ENCODE measurements at regions of chr1 and their contacts with region 1.

Region 1: DNA sequence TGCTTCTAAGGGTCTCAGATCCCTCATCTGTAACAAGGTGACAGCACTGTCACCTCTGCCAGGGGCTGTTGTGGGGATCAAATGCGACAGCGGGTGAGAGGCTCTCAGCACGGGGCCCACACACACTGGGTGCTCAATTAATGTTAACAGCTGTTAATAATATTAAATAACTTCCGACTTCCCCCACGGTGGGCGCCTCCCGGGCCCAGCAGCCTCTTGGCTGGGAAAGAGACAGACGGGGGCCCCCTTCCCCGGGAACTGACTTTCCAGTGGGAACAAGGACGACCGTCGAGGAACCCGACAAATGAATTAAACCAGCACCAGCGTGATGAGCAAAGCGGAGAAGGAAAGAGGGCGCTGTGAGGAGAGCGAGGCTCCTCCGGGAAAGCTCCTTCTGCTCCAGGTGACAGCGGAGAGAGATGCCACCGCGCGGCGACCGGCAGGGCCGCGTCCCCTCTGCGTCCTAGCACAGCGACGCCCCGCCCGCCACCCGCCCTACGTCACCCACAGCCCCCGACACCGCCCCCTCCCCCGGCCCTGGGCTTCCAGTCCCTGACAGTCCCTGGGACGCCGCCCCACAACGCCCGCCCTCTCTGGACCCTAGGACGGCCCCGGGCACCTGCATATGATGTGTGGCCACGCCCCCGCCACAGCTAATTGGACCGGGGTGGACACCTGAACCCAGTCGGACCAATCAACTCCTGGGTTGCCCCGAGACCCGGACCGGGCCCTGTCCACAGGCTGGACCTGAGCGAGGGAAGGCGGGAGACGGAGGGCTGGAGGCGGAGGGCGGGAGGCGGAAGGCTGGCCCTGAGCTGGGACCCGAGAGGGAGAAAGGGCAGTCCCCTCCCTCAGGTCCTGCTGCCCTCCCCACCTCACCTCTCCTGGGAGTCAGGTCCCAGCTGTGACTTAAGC is 38.2 kb downstream of the MATN1 start:
- DNase-seq: no peak
- ATAC-seq: no peak
- H3K4me3 ChIP-seq: no peak overlapping the region
- H3K27ac ChIP-seq: no peak overlapping the region
- H3K4me1 ChIP-seq: no peaks in the 10 kb centered on the region
- H3K27me3 ChIP-seq: peaks cover 31 to 40% (median 32%) of the 10 kb centered on the region in 3 donors
- CTCF ChIP-seq: no peak
- POLR2A ChIP-seq: no peak

Region 2: DNA sequence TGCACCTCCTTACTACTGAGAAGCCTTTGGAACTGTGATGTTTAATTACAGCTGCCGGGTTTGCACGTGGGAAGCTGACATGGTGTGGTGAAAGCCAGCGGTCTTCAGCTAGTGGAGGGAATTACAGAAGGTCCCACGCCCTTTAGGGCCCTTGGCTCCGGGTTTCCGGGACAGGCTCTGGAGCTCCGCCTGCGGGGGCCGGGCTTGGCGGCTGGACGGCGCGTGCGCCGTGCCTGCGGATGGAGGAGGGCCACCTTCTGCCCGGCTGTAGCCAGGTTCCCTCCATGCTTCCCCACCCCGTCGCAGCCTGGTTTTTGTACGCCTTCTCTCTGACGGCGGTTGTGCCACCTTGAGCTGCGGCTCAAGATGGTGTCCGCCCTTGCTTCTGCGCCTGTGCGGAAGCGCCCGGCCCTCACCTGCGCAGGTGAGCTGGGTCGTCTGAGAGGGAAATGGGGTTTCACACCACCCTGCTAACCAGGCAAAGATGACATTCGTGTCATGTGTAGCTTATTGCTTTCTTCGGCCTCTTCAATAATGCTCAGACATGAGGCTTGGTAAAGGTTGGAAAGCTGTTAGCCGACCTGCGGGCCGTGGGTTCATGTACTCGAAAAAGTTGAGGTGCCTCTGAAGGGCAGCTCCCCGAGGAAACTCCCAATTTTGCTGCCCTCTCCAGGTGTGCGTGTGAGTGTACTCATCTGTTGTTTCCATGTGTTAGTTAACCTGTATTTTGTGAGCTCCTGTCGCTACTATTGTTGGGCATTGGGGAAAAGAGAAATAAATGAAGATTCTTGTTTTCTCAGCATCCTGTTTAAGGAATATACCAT is 1909.8 kb before region 1 on chr1:
- in situ Hi-C with region 1: loop called in 1 of 4 experiments (anchors 25 kb)
- intact Hi-C with region 1: no loop called
- DNase-seq: peak; percentile 23 to 51
- ATAC-seq: peak in 1 of 2 donors; percentile 71
- H3K4me3 ChIP-seq: peak overlapping the region in 3 of 4 donors; percentile 32 to 44 (median 40)
- H3K27ac ChIP-seq: no peak overlapping the region
- H3K4me1 ChIP-seq: no peaks in the 10 kb centered on the region
- H3K27me3 ChIP-seq: no peaks in the 10 kb centered on the region
- CTCF ChIP-seq: no peak
- POLR2A ChIP-seq: no peak

Region 3: DNA sequence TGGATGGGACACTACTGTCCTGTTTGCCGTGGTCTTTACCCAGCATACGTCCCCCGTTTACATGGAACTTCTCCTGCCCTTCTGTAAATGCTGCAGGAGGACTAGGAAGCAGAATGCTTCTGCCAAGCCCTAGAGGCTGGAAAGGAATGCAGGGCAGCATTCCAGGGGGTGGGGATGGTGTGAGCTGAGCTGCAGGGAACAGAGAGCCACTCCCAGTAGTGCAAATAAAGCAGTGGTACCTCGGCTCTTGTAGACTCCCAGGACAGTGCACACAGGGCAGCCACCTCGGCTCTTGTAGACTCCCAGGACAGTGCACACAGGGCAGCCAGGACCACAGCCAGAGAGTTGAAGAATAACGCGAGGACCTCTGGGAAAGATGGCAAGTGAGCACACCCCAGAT is 1413.4 kb before region 1 on chr1:
- in situ Hi-C with region 1: loop called in 1 of 4 experiments (anchors 25 kb)
- intact Hi-C with region 1: no loop called
- DNase-seq: peak in 1 of 2 donors; percentile 43
- ATAC-seq: no peak
- H3K4me3 ChIP-seq: no peak overlapping the region
- H3K27ac ChIP-seq: no peak overlapping the region
- H3K4me1 ChIP-seq: peaks cover 7 to 10% of the 10 kb centered on the region in 2 donors
- H3K27me3 ChIP-seq: no peaks in the 10 kb centered on the region
- CTCF ChIP-seq: no peak
- POLR2A ChIP-seq: no peak

Region 4: DNA sequence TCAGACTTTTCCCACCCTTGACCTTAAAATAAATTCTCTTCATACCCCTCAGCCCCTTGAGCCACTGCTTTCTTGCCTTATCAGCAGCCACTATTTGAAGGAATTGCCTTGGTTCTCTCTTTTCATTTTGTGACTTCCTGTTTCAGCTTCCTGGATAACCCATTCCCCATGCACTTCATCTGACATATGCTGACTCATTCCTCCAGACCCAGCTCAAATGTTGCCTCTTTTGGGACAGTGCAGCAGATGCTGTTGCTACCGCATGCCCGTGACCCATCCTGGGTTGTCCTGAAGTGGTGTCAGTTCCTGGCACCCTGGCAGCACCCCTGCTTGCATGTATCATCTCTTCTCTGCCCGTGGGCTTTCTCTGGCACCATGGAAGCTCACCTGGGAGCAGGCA is 952.7 kb before region 1 on chr1:
- in situ Hi-C with region 1: no loop called
- intact Hi-C with region 1: no loop called
- DNase-seq: no peak
- ATAC-seq: no peak
- H3K4me3 ChIP-seq: no peak overlapping the region
- H3K27ac ChIP-seq: no peak overlapping the region
- H3K4me1 ChIP-seq: no peaks in the 10 kb centered on the region
- H3K27me3 ChIP-seq: no peaks in the 10 kb centered on the region
- CTCF ChIP-seq: no peak
- POLR2A ChIP-seq: no peak

Region 5: GRCh38 chr1:29749024-29749945 is 935.9 kb before region 1 on chr1:
- in situ Hi-C with region 1: no loop called
- intact Hi-C with region 1: loop called (anchors 5 kb)
- DNase-seq: no peak
- ATAC-seq: no peak
- H3K4me3 ChIP-seq: no peak overlapping the region
- H3K27ac ChIP-seq: no peak overlapping the region
- H3K4me1 ChIP-seq: no peaks in the 10 kb centered on the region
- H3K27me3 ChIP-seq: no peaks in the 10 kb centered on the region
- CTCF ChIP-seq: no peak
- POLR2A ChIP-seq: no peak

Region 6: GRCh38 chr1:29793101-29793546 is 892.0 kb before region 1 on chr1:
- in situ Hi-C with region 1: loop called in 1 of 4 experiments (anchors 25 kb)
- intact Hi-C with region 1: no loop called
- DNase-seq: peak; percentile 38 to 65
- ATAC-seq: peak; percentile 36 to 88
- H3K4me3 ChIP-seq: no peak overlapping the region
- H3K27ac ChIP-seq: no peak overlapping the region
- H3K4me1 ChIP-seq: no peaks in the 10 kb centered on the region
- H3K27me3 ChIP-seq: no peaks in the 10 kb centered on the region
- CTCF ChIP-seq: peak in 4 of 5 experiments; percentile 31 to 76 (median 68)
- POLR2A ChIP-seq: no peak